PC-3 (cell line): ENCODE measurements at regions of chr20 and their contacts with region 1.

Region 1: GRCh38 chr20:56554869-56555268 is 21.8 kb downstream of the FAM209B start:
- DNase-seq: peak; percentile 99
- ATAC-seq: peak; percentile 92
- H3K4me3 ChIP-seq: peak overlapping the region; percentile 8; the same call in 1 of the 2 replicates
- H3K27ac ChIP-seq: peak overlapping the region; percentile 42
- H3K4me1 ChIP-seq: peaks cover 15% of the 10 kb centered on the region
- H3K27me3 ChIP-seq: no peaks in the 10 kb centered on the region
- CTCF ChIP-seq: 0 out of 2 replicates have a peak, but pooled peaks have one; percentile 17

Region 2: DNA sequence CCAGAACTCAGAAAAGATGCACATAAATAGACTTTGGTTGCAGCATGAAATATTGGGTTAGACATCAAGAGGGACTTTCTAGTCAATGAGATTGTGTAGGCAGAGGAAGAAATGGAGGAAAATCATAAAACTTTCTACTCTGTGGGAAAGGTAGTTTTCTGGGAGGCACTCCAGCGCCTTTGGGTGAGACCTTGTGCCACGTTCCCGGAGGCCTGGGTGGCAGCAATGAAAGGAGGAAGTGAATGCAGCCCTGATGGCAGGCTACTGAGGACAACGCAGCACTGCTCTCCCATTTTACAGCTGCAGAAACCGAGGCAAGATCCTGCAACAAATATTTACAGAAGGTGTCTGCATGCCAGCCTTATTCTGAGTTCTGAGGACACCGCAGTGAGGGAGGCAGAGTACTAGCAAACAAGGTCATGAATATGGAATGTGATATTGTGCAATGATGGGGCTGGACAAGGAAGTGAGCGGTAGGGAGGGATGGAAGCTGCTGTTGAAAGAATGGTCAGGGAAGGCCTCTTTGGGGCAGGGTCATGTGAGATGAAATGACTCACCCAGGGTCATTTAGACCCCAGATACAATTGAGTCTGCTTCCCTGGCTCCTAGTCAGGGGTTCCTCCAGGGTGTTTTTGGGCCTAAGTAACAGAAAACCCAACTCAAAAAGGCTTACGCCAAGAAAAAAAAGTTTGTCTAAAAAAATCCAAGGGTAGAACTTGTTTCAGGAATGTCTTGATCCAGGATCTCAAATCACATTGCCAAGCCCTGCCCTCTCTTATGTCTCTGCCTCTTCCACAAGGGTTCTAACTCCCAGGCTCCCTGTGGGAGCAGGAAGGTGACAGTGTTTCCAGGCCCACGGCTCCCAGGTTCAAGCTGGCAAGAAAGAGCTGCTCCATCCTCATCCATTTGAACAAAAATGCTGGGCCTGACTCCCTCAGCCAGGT is 233.4 kb after region 1 on chr20:
- CTCF ChIA-PET with region 1: interaction called, 6 read pairs
- POLR2A ChIA-PET with region 1: no interaction called
- intact Hi-C with region 1: loop called (anchors 2 kb)
- DNase-seq: peak; percentile 99
- ATAC-seq: peak; percentile 70
- H3K4me3 ChIP-seq: peak overlapping the region; percentile 46
- H3K27ac ChIP-seq: peak overlapping the region; percentile 98
- H3K4me1 ChIP-seq: peaks cover 52% of the 10 kb centered on the region
- H3K27me3 ChIP-seq: no peaks in the 10 kb centered on the region
- CTCF ChIP-seq: no peak

Region 3: GRCh38 chr20:56995576-56996075 is 440.8 kb after region 1 on chr20:
- CTCF ChIA-PET with region 1: no interaction called
- POLR2A ChIA-PET with region 1: no interaction called
- intact Hi-C with region 1: loop called (anchors 2 kb)
- DNase-seq: peak; percentile 72
- ATAC-seq: peak; percentile 85
- H3K4me3 ChIP-seq: no peak overlapping the region
- H3K27ac ChIP-seq: no peak overlapping the region
- H3K4me1 ChIP-seq: peaks cover 4% of the 10 kb centered on the region; the same call in 1 of the 2 replicates
- H3K27me3 ChIP-seq: no peaks in the 10 kb centered on the region
- CTCF ChIP-seq: peak; percentile 93

Region 4: DNA sequence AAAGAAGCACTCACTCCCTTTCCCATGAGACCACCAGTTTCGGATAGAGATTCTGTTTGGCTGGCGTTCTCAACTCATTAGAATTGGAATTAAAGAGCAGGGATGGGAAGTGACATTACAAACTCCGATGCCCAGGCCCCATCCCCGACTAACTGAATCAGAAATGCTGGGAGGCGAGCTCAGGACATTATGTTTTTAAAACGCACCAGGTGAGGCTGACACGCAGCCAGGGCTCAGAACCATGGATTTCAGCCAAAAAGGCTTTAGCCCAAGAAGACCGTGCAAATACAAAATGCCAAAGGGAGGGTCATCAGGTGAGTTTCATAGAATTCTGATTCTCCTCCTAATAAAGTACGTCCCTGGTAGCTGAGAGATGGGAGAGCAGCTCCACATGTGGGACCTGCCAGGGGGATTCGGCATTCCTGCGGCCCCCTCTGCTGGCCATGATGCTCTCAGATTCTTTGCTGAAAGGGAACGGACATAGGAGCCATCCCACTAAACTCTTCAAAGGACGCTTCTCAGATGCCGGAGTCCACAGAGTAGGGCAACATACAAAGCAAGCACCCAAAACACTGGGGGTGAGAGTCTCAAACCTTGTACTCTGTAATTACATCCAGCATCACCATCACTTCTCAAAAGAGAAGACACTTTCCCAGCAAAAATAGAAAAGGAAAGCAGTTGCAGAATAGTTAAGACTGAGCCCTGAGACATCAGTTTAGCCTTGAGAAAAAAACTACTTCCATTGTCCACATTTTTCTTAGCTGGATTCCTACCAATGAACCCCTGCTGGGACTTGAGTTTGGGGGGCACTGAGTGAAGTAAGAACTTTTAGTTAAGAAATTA is 506.4 kb after region 1 on chr20:
- CTCF ChIA-PET with region 1: interaction called, 3 read pairs
- POLR2A ChIA-PET with region 1: no interaction called
- intact Hi-C with region 1: loop called (anchors 5 kb)
- DNase-seq: peak; percentile 68
- ATAC-seq: peak; percentile 37; the same call in 1 of the 2 replicates
- H3K4me3 ChIP-seq: peak overlapping the region; percentile 20; the same call in 1 of the 2 replicates
- H3K27ac ChIP-seq: peak overlapping the region; percentile 87
- H3K4me1 ChIP-seq: peaks cover 39% of the 10 kb centered on the region
- H3K27me3 ChIP-seq: no peaks in the 10 kb centered on the region
- CTCF ChIP-seq: peak; percentile 83